SK-N-SH (cell line): ENCODE measurements at regions of chr6 and their contacts with region 1.

Region 1: DNA sequence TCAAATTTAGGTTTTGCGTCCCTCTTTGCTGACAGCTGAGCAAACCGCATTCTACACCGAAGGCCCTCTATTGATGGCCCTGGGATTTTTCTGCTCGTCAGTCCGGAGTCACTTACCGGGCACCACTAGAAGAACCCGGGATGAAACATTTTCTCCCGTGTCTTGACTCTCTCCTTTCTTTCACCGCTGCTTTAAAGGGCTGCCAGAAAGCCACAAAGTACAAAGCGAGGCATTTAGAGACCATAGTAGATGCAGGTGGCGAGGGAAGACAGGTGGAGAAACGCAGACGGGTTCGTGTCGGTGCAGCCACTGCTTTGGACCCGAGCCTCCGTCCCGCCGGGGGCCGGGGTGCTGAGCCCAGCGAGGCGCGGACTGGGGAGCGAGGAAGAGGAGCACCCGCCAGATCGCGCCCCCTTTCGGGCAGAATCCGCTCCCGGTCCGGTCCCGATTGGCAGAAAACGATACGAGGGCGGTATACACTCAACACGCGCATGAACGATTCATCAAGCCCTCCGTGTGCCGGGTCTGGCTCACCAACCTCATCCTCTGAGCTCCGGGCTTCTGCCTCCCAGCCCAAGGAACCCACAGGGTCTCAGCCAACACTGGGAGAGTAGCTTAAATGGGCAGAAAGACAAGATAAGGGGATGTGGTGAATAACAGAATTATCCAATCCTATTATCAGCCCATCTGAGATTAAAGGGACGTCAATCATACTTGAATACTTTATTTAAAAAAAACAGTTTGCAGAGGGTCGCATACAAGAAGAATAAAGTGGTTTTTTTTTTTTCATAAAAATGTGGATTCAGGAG is 84.9 kb downstream of the TRIM27 start:
- DNase-seq: peak; percentile 80
- H3K4me3 ChIP-seq: peak overlapping the region; percentile 77 to 92
- H3K27ac ChIP-seq: peak overlapping the region; percentile 52 to 56; a peak in 3 of 4 replicates
- H3K4me1 ChIP-seq: peaks cover 5 to 6% of the 10 kb centered on the region in 2 experiments; a peak in 2 of 4 replicates
- H3K27me3 ChIP-seq: peaks cover 16% of the 10 kb centered on the region; the same call in 1 of the 2 replicates
- CTCF ChIP-seq: peak; percentile 79
- EP300 ChIP-seq: no peak
- RAD21 ChIP-seq: no peak

Region 2: DNA sequence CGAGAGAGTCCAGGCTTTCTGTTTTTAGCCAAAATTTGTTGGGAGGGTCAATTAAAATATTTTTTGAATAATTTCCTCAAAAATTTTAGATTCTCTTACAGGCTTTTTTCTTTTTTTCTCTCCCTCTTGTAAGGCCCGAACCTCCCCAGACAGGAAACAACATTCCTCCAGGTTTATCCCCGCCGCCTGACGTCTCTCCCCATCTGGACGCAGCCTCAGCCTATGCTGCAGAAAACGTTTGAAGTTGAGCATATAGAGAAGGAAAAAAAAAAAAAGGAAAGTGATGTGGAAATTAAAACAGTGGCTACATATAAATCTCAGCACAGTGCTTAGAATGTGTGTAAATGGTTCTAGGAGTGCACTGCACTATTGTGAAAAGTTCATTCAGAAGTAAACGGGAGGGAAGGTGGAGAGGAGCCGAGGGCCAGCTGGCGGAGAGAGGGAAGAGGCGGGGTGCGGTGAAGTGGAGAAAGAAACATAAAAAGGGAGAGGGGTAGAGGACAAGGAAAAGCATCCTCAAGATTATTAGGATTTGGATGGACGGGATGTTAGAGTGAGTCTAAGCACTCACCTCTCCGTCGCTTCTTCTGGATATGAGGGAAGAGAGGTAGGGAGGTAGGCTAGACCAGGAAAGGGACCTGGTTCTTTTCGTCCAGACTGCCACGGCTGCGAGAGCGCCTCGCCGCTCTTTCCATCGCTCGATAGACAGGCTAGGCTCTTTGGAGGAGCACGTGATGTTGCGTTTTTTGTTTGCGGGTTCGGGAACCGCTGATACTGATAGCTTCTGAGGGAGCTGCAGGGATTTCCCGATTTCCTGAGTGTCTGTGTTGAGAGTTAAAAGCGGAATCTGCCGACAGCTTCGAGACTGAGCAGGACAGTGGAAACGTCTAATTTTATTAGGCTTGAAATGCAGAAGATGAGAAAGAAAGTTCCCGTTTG is 13.8 kb before region 1 on chr6:
- CTCF ChIA-PET with region 1: interaction called, 10 read pairs
- POLR2A ChIA-PET with region 1: no interaction called
- DNase-seq: no peak
- H3K4me3 ChIP-seq: peak overlapping the region in 1 of 2 experiments; percentile 37; a peak in 1 of 4 replicates
- H3K27ac ChIP-seq: no peak overlapping the region
- H3K4me1 ChIP-seq: no peaks in the 10 kb centered on the region
- H3K27me3 ChIP-seq: peaks cover 64% of the 10 kb centered on the region
- CTCF ChIP-seq: no peak
- EP300 ChIP-seq: no peak
- RAD21 ChIP-seq: no peak